ENCODE measurements at regions of chr9 and their contacts with region 1.

Region 1: DNA sequence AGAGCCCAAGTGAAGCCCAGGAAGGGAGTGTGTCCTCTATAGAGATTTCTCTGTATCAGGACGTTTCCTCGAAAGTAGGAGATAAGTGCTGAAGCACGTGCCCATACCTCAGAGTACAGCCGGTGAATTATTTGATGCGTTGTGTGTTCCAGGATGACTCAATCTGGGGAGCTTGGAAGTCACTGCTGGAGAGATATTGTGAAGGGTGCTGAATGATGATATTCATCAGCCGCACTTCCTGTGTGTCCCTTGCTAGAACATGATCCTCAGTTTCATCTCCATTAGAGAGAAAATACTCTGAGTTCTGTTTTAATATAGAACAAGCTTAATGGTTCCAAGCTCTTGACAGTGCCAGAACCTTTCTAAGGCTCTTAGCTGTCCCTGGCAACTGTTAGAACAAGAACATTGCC is 402.3 kb upstream of the ADAMTSL1 start:
- DNase-seq: no peak
- ATAC-seq: no peak
- H3K4me3 ChIP-seq: no peak overlapping the region
- H3K27ac ChIP-seq: no peak overlapping the region
- H3K4me1 ChIP-seq: no peaks in the 10 kb centered on the region
- H3K27me3 ChIP-seq: no peaks in the 10 kb centered on the region
- CTCF ChIP-seq: no peak
- POLR2A ChIP-seq: no peak

Region 2: GRCh38 chr9:17137566-17137965 is 934.1 kb before region 1 on chr9:
- in situ Hi-C with region 1: no loop called
- intact Hi-C with region 1: no loop called
- DNase-seq: no peak
- ATAC-seq: no peak
- H3K4me3 ChIP-seq: no peak overlapping the region
- H3K27ac ChIP-seq: no peak overlapping the region
- H3K4me1 ChIP-seq: peaks cover 5 to 10% of the 10 kb centered on the region in 2 donors
- H3K27me3 ChIP-seq: no peaks in the 10 kb centered on the region
- CTCF ChIP-seq: no peak
- POLR2A ChIP-seq: no peak

Region 3: DNA sequence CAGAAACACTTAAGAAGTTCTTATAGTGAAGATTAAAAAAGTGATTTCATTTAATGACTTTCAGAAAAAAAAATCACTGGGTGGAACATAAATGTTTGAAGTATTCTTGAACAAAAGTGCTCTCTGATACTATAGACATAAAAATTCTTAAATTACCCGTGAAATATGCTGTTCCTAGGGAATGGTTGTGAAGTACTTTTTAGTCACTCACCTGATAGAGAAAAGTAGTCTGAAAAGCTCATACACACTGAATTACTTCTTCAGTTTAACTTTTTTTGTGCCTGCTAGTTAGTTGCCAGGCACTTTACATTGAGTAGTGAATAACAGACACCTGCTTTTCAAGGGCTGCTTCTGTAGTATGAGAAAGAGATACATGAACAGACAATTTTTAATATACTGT is 414.8 kb before region 1 on chr9:
- in situ Hi-C with region 1: no loop called
- intact Hi-C with region 1: loop called (anchors 5 kb)
- DNase-seq: no peak
- ATAC-seq: no peak
- H3K4me3 ChIP-seq: no peak overlapping the region
- H3K27ac ChIP-seq: no peak overlapping the region
- H3K4me1 ChIP-seq: no peaks in the 10 kb centered on the region
- H3K27me3 ChIP-seq: no peaks in the 10 kb centered on the region
- CTCF ChIP-seq: no peak
- POLR2A ChIP-seq: no peak

Region 4: DNA sequence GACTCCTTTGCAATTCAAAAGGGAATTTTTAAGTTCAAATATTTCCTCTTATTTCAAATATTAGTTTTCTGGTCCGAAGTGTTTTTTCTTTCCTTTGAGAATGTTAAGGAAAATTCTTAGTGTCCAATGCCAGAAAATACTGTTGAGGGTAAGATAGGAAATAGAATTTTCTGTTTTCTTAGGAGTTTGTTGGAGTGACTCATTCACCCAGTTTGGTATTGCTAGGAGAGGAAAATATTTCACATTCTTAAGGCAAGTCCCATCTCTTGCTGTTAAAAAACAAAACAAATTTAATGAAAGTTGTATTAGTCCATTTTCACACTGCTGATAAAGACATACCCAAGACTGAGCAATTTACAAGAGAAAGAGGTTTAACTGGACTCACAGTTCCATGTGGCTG is 53.1 kb after region 1 on chr9:
- in situ Hi-C with region 1: no loop called
- intact Hi-C with region 1: no loop called
- DNase-seq: no peak
- ATAC-seq: no peak
- H3K4me3 ChIP-seq: no peak overlapping the region
- H3K27ac ChIP-seq: no peak overlapping the region
- H3K4me1 ChIP-seq: no peaks in the 10 kb centered on the region
- H3K27me3 ChIP-seq: no peaks in the 10 kb centered on the region
- CTCF ChIP-seq: no peak
- POLR2A ChIP-seq: no peak

Measured in gastrocnemius medialis (tissue), 4 donors.